Pancreas (tissue), 10 donors: ENCODE measurements at regions of chr15 and their contacts with region 1.

Region 1: GRCh38 chr15:25641762-25642161 is 202.9 kb upstream of the UBE3A start:
- DNase-seq: no peak
- ATAC-seq: no peak
- H3K4me3 ChIP-seq: no peak overlapping the region
- H3K27ac ChIP-seq: no peak overlapping the region
- H3K4me1 ChIP-seq: no peaks in the 10 kb centered on the region
- H3K27me3 ChIP-seq: no peaks in the 10 kb centered on the region
- CTCF ChIP-seq: no peak

Region 2: DNA sequence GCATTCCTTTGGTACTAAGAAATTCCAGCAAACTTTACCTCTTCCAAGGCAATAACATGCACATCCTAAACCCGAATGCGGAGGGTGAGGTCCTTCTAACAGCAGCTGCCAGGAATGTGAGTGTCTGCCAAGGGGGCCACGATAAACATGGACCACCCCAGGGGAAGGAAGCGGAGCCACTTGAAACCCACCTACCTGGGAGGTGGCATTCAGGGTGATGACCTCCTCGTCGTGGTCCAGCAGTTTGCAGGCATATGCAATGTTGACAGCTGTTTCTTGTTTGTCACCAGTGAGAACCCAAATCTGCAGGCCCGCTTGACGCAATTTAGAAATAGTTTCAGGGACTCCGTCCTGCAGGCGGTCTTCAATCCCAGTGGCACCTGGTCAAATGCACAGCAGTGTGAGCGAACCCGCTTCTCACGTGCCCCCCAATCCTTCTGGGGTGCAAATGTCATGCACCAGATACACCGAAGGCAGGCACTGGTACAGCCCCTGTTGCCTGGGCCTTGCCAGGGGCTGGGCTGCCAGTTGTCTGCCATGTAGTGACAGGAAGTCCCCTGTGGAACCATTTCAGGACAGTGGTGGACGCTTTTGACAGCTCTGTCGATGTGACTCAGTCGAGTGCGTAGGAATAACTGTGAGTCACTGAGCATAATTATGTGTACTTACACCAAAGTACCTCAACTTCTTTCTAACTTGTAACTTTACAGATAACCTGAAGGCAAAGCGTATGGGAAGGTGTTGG is 60.1 kb after region 1 on chr15:
- intact Hi-C with region 1: loop called in 1 of 3 experiments (anchors 10 kb)
- DNase-seq: peak in 1 of 6 donors; percentile 24
- ATAC-seq: no peak
- H3K4me3 ChIP-seq: no peak overlapping the region
- H3K27ac ChIP-seq: no peak overlapping the region
- H3K4me1 ChIP-seq: no peaks in the 10 kb centered on the region
- H3K27me3 ChIP-seq: no peaks in the 10 kb centered on the region
- CTCF ChIP-seq: no peak